Activated T-helper 2 cell treated with anti-CD3 and anti-CD28 coated beads, Interferon-gamma antibody, Interleukin-2, Interleukin-4, amounts not matched to agents 10 μg/mL and 5 μg/mL and 100 μg/mL, durations not matched to agents 14 hours and 24 hours and 36 hours (primary cell): ENCODE measurements at regions of chr20 and their contacts with region 1.

Region 1: GRCh38 chr20:38842558-38842981 is 37.1 kb downstream of the PPP1R16B start:
- DNase-seq: no peak
- H3K4me3 Mint-ChIP-seq: peak overlapping the region; percentile 72
- H3K27ac Mint-ChIP-seq: peak overlapping the region; percentile 97
- H3K4me1 Mint-ChIP-seq: peaks cover 78% of the 10 kb centered on the region
- H3K27me3 Mint-ChIP-seq: no peaks in the 10 kb centered on the region

Region 2: DNA sequence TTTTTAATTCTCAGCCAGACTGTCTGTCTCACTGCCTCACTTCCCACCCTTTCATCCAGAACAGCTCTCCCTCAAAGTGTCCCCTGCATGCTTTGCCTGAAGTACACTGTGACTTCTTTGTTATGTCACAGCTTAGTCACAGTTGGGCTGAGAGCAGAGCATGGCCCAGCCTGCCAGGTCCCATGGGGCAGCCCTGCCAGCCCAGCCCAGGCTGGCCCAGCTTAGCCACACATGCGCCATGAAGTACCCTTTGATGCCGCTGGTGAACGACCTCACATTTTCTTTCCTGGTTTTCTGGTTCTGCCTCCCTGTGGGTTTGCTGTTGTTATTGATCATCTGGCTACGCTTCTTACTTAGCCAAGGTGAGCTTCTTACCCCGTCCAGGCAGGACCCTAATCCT is 261.6 kb before region 1 on chr20 and contains the start of gene ADIG:
- intact Hi-C with region 1: no loop called
- DNase-seq: no peak
- H3K4me3 Mint-ChIP-seq: no peak within 1 kb of the TSS
- H3K27ac Mint-ChIP-seq: no peak within 1 kb of the TSS
- H3K4me1 Mint-ChIP-seq: no peaks in the 10 kb centered on the region
- H3K27me3 Mint-ChIP-seq: no peaks in the 10 kb centered on the region
- total RNA-seq, gene ADIG: not detected in 2 replicates

Region 3: GRCh38 chr20:38805502-38805957 is 37.0 kb before region 1 on chr20 and contains the start of gene PPP1R16B:
- intact Hi-C with region 1: loop called (anchors 1 kb)
- DNase-seq: peak; percentile 78
- H3K4me3 Mint-ChIP-seq: peak within 1 kb of the TSS; percentile 91
- H3K27ac Mint-ChIP-seq: peak within 1 kb of the TSS; percentile 98
- H3K4me1 Mint-ChIP-seq: peaks cover 48% of the 10 kb centered on the region
- H3K27me3 Mint-ChIP-seq: no peaks in the 10 kb centered on the region
- total RNA-seq, gene PPP1R16B: 109 and 111 TPM in 2 replicates

Region 4: DNA sequence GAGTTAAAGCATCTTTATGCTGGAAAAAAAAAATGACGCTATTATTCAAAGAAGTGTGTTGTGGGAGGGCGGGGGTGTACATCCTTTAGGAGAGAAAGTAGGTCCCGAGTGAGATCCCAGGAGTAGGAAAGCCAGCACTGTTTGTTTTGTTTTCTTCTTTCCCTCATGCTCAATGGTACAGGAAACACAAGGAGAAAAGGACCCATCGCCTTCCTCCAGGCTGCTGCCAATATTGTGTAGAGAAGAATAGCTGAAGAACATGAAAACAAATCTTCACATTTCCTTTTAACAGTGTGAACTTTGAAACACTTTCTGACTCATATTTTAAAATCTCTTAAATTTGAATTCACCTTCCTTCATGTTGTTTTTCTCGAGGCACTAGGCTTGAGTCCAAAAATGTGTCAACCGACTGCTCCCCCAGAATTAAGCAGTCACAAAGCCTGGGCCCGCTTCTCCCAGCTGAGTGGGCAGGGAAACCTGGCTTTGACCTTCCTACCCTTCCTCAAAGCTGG is 14.7 kb before region 1 on chr20:
- intact Hi-C with region 1: loop called (anchors 1 kb)
- DNase-seq: no peak
- H3K4me3 Mint-ChIP-seq: peak overlapping the region; percentile 28
- H3K27ac Mint-ChIP-seq: peak overlapping the region; percentile 87
- H3K4me1 Mint-ChIP-seq: peaks cover 63% of the 10 kb centered on the region
- H3K27me3 Mint-ChIP-seq: no peaks in the 10 kb centered on the region

Region 5: GRCh38 chr20:38863024-38863851 is 20.7 kb after region 1 on chr20:
- intact Hi-C with region 1: loop called (anchors 2 kb)
- DNase-seq: no peak
- H3K4me3 Mint-ChIP-seq: no peak overlapping the region
- H3K27ac Mint-ChIP-seq: peak overlapping the region; percentile 84
- H3K4me1 Mint-ChIP-seq: peaks cover 52% of the 10 kb centered on the region
- H3K27me3 Mint-ChIP-seq: no peaks in the 10 kb centered on the region